AG04450 (cell line): ENCODE measurements at regions of chr3 and their contacts with region 1.

Region 1: DNA sequence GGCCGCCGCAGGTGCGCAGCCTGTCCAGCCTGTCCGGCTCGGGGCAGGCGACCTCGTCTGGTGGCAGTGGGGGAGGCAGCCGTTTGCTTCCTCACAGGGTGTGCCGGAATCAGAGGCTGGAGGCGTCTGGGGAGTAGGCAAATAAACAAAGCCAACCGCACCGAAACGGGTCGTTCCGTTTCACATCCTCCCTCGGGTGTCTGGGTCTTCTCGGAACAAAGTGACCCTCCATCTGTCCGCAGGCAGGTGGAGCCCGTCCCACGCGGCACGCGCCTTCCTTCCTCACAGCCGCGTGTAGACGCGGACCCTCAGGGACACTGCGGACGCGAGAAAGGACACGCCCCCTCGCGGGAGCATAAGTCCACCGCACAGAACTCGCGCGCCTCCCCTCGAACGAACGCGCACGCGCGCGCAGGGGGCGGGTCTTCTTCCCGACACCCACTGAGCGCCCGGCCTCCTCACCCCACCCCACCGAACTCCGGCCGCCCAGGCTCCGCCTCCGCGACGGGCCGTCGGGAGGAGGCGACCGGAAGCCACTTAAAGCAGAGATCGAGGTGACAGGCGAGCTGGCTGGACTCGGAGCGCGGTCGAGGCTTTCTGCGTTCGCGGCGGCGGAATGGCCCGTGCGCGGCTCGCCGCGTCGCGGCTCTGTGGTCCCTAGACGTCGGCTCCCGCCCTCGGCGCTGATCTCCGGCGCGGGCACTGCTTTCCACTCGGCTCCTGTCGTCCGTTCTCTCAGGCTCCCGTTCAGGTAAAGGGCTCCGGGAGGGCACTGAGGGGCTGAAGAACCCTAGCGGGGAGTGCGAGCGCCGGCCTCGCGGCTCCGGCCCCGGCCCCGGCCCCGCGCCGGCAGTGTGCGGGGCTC is at the start of gene TIPARP:
- DNase-seq: peak; percentile 93
- H3K4me3 ChIP-seq: peak within 1 kb of the TSS; percentile 82
- H3K27ac ChIP-seq: peak within 1 kb of the TSS; percentile 77
- H3K27me3 ChIP-seq: no peaks in the 10 kb centered on the region
- CTCF ChIP-seq: peak; percentile 60
- polyA plus RNA-seq, gene TIPARP: 17.8 and 25.1 TPM in 2 replicates

Region 2: DNA sequence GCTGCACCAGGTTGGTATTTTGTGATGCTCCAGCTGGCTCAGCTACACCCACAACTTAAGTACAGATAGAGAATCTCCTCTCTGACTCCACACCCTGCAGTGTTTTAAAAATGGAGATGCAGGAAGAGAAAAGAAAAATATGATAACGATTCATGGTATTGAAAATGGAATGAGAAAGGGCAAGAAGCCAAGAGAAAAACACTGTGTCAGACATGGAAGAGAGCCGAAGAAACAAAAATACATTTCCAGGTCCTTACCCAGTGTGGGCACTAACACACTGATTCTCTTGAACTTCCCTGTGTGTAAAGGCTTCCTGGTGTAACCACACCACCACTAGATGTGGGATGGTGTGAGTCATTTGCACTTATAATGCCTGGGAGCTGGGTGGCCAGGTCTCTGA is 710.7 kb before region 1 on chr3:
- CTCF ChIA-PET with region 1: no interaction called
- POLR2A ChIA-PET with region 1: no interaction called
- DNase-seq: no peak
- H3K4me3 ChIP-seq: no peak overlapping the region
- H3K27ac ChIP-seq: peak overlapping the region; percentile 58
- H3K27me3 ChIP-seq: no peaks in the 10 kb centered on the region
- CTCF ChIP-seq: no peak

Region 3: DNA sequence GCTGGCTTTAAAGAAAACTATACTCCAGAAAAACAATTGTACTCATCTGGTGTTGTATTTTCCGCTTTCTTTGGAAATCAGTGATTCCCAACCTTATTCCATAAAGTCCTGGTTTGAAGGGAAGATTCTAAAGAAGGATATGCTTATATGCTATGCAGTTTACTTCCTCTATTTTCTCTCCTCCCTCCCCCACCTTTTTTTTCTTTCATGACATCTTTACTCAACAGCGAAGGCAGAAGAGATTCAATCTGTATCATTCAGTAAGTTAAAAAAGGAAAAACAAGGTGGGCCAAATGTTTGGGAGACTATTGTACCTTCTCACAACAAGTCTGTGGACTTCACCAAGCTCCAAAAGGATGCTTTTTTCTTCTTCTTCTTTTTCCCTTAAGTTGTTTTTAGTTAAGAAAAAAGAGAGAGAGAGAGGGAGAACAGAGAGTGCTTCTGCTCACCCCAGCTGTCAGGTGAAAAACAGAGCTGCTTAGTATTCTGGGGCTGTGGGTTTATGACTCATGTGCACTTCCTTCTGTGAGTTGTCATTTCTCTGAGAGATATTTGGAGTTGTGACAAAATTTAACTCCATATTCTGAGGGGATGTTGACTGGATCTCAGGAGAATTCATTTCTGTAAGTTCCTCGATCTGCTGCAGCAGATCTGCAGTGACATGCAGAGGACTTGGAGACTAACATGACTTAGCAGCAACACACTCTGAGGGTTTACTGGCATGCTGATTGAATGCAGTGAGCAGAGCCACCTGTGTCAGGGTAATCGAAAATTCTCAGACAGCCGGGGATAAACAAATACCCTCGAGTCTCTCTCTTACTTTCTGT is 190.1 kb before region 1 on chr3:
- CTCF ChIA-PET with region 1: interaction called, 10 read pairs
- POLR2A ChIA-PET with region 1: no interaction called
- DNase-seq: no peak
- H3K4me3 ChIP-seq: no peak overlapping the region
- H3K27ac ChIP-seq: no peak overlapping the region
- H3K27me3 ChIP-seq: no peaks in the 10 kb centered on the region
- CTCF ChIP-seq: no peak

Region 4: GRCh38 chr3:156535162-156535627 is 139.1 kb before region 1 on chr3:
- CTCF ChIA-PET with region 1: interaction called, 14 read pairs
- POLR2A ChIA-PET with region 1: interaction called, 4 read pairs
- DNase-seq: peak; percentile 98
- H3K4me3 ChIP-seq: no peak overlapping the region
- H3K27ac ChIP-seq: peak overlapping the region; percentile 93
- H3K27me3 ChIP-seq: no peaks in the 10 kb centered on the region
- CTCF ChIP-seq: peak; percentile 31; the same call in 1 of the 2 replicates

Region 5: GRCh38 chr3:156637488-156638059 is 36.7 kb before region 1 on chr3:
- CTCF ChIA-PET with region 1: no interaction called
- POLR2A ChIA-PET with region 1: no interaction called
- DNase-seq: no peak
- H3K4me3 ChIP-seq: no peak overlapping the region
- H3K27ac ChIP-seq: no peak overlapping the region
- H3K27me3 ChIP-seq: peaks cover 2% of the 10 kb centered on the region
- CTCF ChIP-seq: no peak

Region 6: GRCh38 chr3:156760333-156760732 is 86.1 kb after region 1 on chr3:
- CTCF ChIA-PET with region 1: no interaction called
- POLR2A ChIA-PET with region 1: no interaction called
- DNase-seq: no peak
- H3K4me3 ChIP-seq: no peak overlapping the region
- H3K27ac ChIP-seq: no peak overlapping the region
- H3K27me3 ChIP-seq: no peaks in the 10 kb centered on the region
- CTCF ChIP-seq: no peak

Region 7: DNA sequence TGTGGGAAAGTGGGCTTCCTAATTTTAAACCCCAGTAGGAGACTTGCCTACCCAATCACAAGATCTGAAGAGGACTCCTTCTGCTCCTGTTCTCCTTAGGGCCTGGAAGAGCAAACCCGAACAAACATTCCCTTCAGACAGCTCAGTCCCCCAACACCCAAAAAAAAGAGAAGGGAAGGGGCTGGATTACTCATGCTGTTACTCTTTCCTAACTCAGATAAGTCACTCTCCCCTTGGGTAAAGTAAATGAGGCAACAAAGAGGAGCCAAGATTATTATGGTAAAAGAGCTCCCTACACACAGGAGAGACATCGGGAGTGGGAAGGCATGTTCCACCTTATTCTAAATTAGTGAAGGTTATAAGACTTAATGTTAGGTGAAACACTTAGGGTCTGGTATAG is 133.7 kb after region 1 on chr3:
- CTCF ChIA-PET with region 1: no interaction called
- POLR2A ChIA-PET with region 1: no interaction called
- DNase-seq: no peak
- H3K4me3 ChIP-seq: no peak overlapping the region
- H3K27ac ChIP-seq: no peak overlapping the region
- H3K27me3 ChIP-seq: no peaks in the 10 kb centered on the region
- CTCF ChIP-seq: no peak

Region 8: DNA sequence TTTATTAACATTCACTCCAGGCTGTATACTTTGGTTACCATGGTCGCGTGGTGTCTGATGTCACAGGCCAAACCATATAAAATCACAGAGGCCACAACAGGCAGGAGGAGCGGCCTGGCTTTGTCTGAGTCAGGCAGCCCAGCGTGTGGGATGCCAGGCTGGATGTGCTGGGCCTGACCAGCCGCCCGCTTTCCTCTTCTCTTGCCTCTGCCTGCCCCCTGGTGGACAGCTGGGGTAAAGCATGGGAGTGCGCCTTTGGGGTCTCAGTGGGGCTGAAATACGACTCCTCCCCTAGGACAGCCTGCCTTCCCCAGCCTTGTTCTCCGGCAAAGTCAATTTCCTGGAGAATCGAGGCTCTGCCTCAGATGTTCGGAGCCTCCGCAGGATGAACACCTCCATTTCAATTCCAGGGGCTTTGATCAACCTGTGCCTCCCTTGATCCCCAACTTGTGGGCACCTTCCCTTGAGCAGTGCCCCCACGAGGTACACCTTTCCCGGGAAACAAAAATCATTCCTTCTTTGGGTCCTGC is 407.5 kb after region 1 on chr3:
- CTCF ChIA-PET with region 1: interaction called, 62 read pairs
- POLR2A ChIA-PET with region 1: interaction called, 10 read pairs
- DNase-seq: peak; percentile 73
- H3K4me3 ChIP-seq: no peak overlapping the region
- H3K27ac ChIP-seq: no peak overlapping the region
- H3K27me3 ChIP-seq: no peaks in the 10 kb centered on the region
- CTCF ChIP-seq: peak; percentile 95